Activated T-helper 1 cell treated with anti-CD3 and anti-CD28 coated beads, Interleukin-12 subunit alpha, Interleukin-12 subunit beta, Interleukin-2, Interleukin-4 antibody, amounts not matched to agents 30 ng/mL and 10 ng/mL and 1 ng/mL, durations not matched to agents 14 hours and 24 hours and 36 hours (primary cell): ENCODE measurements at regions of chr1 and their contacts with region 1.

Region 1: DNA sequence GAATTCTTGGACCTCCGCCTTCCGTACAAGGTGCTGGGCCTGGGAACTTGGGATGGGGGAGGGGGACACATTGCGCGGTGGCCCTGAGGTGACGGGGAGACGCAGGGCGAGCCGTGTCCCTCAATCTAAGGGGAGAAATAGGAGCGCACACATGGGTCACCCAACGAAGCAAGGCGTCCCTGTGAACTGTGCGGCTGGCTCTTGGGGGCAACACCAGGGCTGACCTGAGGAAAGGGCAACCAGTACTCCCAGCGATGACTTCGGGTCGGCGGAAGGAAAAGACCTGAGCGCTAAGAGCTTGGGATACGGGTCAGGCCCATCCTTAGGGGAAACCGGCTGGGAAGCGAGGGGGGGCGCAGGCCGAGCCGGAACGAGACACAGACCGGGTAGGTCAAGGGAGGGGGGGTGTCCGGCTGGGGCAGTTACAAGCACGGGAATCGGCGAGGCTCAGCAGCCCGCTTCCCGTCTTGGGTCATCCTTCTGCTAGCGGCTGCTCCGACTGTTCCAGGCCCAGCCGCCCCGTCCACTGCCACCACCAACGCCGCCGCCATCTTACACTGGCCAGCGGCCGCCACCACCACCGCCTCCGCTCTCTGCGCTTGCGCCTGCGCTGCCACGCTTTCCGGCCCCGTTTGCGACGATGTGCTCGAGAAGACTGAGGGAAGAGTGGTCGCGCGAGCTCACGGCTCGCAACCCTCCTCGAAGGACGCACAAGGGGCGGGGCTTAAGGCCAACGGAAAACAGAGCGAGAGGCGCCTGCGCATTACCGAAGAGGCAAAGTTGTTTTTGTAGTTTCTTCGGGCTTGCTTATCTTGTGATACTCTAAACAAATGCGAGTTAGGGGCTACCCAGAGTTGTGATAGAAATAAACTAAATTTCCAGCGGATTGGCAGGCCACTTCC is at the start of gene DCAF8:
- DNase-seq: peak; percentile 98
- H3K4me3 Mint-ChIP-seq: peak within 1 kb of the TSS; percentile 95
- H3K27ac Mint-ChIP-seq: peak within 1 kb of the TSS; percentile 99
- H3K4me1 Mint-ChIP-seq: peaks cover 51% of the 10 kb centered on the region
- H3K27me3 Mint-ChIP-seq: no peaks in the 10 kb centered on the region
- total RNA-seq, gene DCAF8: 112 and 117 TPM in 2 replicates

Region 2: GRCh38 chr1:159924981-159925712 is 337.0 kb before region 1 on chr1 and contains the start of gene TAGLN2:
- intact Hi-C with region 1: loop called (anchors 1 kb)
- DNase-seq: peak; percentile 92
- H3K4me3 Mint-ChIP-seq: peak within 1 kb of the TSS; percentile 94
- H3K27ac Mint-ChIP-seq: peak within 1 kb of the TSS; percentile 99
- H3K4me1 Mint-ChIP-seq: peaks cover 57% of the 10 kb centered on the region
- H3K27me3 Mint-ChIP-seq: peaks cover 1% of the 10 kb centered on the region
- total RNA-seq, gene TAGLN2: 442 and 461 TPM in 2 replicates

Region 3: GRCh38 chr1:160193091-160193819 is 68.9 kb before region 1 on chr1:
- intact Hi-C with region 1: no loop called
- DNase-seq: peak; percentile 63
- H3K4me3 Mint-ChIP-seq: no peak overlapping the region
- H3K27ac Mint-ChIP-seq: no peak overlapping the region
- H3K4me1 Mint-ChIP-seq: no peaks in the 10 kb centered on the region
- H3K27me3 Mint-ChIP-seq: no peaks in the 10 kb centered on the region

Region 4: GRCh38 chr1:160205242-160206035 is 56.7 kb before region 1 on chr1 and contains the start of gene PEA15:
- intact Hi-C with region 1: loop called (anchors 1 kb)
- DNase-seq: peak; percentile 69
- H3K4me3 Mint-ChIP-seq: peak within 1 kb of the TSS; percentile 85
- H3K27ac Mint-ChIP-seq: peak within 1 kb of the TSS; percentile 87
- H3K4me1 Mint-ChIP-seq: peaks cover 48% of the 10 kb centered on the region
- H3K27me3 Mint-ChIP-seq: no peaks in the 10 kb centered on the region
- total RNA-seq, gene PEA15: 71.2 and 71.3 TPM in 2 replicates

Region 5: DNA sequence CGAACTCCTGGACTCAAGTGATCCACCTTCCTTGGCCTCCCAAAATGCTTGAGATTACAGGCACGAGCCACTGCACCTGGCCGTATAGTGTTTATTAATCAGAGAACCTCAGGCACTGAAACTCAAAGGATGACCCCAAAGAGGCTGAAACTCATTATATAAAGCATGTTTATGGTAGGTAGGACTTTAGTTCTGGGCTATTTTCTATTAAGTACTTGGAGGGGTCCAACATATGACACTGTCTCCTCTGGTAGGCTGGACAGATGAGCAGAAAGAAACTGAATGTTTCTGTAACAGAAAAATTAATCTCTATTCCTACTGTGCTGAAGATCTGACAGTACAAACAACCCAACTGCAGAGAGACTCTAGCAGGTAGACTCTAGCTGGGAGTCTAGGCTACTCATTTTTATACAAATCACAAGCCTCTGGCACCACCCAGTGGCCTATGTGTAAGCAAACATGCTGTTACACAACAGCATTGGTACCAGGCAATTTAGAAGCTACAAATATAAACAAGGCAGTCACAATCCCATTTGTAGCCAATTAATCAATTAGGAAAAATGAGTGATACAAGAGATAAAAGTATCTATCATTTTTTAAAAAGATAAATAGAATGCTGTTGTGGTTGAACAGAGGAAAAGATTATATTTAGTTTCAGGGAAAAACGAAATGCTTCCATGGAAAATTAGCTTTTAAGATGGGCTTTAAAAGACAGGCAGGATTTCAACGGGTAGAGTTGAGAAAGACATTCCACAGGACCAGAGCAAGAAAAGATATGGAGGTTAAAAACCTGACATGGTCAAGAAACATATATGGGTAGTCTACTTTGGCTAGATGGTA is 10.2 kb before region 1 on chr1:
- intact Hi-C with region 1: loop called (anchors 1 kb)
- DNase-seq: peak; percentile 36
- H3K4me3 Mint-ChIP-seq: no peak overlapping the region
- H3K27ac Mint-ChIP-seq: peak overlapping the region; percentile 68
- H3K4me1 Mint-ChIP-seq: peaks cover 13% of the 10 kb centered on the region
- H3K27me3 Mint-ChIP-seq: no peaks in the 10 kb centered on the region

Region 6: DNA sequence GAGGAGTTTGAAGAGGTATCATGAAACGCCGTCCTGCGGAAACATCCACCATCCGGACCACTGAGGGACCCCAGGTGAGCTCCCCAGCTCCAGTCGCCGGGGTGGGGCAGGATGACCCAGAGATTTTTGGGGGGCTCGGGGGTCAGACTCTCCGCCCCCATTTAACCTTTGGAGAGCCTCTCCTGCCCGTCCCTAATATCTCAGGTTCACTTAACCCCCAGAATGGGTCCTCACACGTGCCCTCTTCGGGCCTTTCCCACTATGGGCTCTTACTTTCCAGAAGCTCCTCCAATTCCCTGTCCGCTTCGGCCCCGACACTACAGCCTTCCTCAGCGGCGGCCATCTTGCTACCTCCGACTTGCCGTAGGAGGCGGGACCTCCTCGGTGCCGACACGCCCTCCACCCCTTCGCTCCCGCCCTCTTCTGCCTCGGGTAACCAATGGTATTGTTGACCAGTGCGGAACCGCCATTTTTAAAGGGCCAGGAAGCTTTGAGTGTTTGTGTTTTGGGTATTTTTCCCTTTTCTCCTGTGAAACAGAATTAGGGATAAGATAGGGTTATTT is 22.7 kb after region 1 on chr1 and contains the start of gene PEX19:
- intact Hi-C with region 1: loop called (anchors 1 kb)
- DNase-seq: peak; percentile 91
- H3K4me3 Mint-ChIP-seq: peak within 1 kb of the TSS; percentile 100
- H3K27ac Mint-ChIP-seq: peak within 1 kb of the TSS; percentile 96
- H3K4me1 Mint-ChIP-seq: peaks cover 19% of the 10 kb centered on the region
- H3K27me3 Mint-ChIP-seq: no peaks in the 10 kb centered on the region
- total RNA-seq, gene PEX19: 55.9 and 59.0 TPM in 2 replicates

Region 7: GRCh38 chr1:160342953-160343869 is 81.1 kb after region 1 on chr1 and contains the starts of genes COPA and NCSTN:
- intact Hi-C with region 1: loop called (anchors 1 kb)
- DNase-seq: peak; percentile 88
- H3K4me3 Mint-ChIP-seq: peak within 1 kb of the TSS; percentile 100
- H3K27ac Mint-ChIP-seq: peak within 1 kb of the TSS; percentile 99
- H3K4me1 Mint-ChIP-seq: peaks cover 61% of the 10 kb centered on the region
- H3K27me3 Mint-ChIP-seq: no peaks in the 10 kb centered on the region
- total RNA-seq, gene COPA: 123 and 126 TPM in 2 replicates
- total RNA-seq, gene NCSTN: 74.8 and 81.6 TPM in 2 replicates

Region 8: DNA sequence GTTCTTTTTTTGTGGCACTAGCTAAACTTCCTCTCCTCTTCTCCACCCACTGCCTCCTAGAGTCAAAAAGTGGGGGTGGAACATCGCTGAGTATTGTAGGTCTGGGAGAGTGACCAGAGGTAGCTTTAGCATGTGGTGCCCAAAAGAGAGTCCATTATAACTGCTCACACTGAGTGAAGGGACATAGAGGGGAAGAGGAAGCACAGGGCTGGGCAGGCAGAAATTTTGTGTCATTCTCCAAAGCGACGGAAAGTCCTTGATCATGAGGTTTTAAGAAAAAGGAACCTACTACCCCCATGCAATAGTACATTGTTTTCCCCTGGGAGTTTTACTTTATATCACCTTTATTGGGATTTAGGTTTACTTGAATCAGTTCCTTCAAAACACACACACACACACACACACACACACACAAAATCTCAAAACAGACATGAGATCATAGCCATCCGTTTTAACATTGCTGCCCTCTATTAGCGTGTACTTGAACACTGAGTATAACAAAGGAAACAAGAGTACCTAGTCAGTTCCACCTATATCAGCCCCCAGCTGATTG is 313.0 kb after region 1 on chr1:
- intact Hi-C with region 1: loop called (anchors 5 kb)
- DNase-seq: no peak
- H3K4me3 Mint-ChIP-seq: peak overlapping the region; percentile 79
- H3K27ac Mint-ChIP-seq: peak overlapping the region; percentile 84
- H3K4me1 Mint-ChIP-seq: peaks cover 96% of the 10 kb centered on the region
- H3K27me3 Mint-ChIP-seq: no peaks in the 10 kb centered on the region